ENCODE measurements at regions of chr17 and their contacts with region 1.

Region 1: DNA sequence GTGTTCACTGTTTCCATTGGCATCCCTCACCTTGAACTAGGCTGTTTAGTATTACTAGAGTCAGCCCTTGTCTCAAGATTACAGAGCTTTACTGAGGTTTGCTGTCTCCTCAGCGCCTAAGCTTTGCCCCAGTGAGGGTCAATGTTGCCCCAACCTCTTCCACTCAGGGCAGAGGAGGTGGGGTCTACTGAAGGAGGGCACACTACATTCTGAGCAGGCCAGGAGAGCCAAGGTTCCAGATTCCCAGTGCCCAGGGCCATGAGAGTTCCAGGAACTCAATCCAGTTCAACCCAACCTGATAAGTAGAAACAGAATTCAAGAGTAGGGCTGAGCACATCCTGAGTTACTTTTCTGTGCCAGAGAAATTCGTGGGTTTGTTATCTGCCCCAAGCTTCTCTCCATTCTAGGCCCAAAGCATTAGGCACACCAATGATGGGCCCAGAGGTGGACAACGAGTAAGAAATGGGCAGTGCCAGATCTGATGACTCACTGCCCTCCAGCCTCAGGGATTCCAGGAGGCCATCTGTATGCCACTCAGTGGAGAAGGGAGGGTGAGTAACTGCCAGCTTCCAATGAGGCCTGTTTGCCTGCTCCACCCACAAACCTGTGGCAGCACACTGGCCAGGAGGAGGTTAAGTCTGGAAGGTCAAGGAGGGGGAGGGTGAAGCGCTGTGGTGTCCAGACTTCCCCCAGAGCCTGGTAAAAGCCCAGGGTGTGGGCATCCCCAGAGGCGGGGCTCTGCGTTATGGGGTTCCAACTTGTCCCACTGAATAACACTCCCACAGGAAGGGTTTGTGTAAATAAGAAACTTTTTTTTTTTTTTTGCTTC is 8.3 kb downstream of the TUBG2 start:
- DNase-seq: peak; percentile 94
- H3K4me3 ChIP-seq: no peak overlapping the region
- H3K27ac ChIP-seq: peak overlapping the region; percentile 32
- H3K4me1 ChIP-seq: peaks cover 40% of the 10 kb centered on the region
- H3K27me3 ChIP-seq: no peaks in the 10 kb centered on the region
- CTCF ChIP-seq: no peak

Region 2: DNA sequence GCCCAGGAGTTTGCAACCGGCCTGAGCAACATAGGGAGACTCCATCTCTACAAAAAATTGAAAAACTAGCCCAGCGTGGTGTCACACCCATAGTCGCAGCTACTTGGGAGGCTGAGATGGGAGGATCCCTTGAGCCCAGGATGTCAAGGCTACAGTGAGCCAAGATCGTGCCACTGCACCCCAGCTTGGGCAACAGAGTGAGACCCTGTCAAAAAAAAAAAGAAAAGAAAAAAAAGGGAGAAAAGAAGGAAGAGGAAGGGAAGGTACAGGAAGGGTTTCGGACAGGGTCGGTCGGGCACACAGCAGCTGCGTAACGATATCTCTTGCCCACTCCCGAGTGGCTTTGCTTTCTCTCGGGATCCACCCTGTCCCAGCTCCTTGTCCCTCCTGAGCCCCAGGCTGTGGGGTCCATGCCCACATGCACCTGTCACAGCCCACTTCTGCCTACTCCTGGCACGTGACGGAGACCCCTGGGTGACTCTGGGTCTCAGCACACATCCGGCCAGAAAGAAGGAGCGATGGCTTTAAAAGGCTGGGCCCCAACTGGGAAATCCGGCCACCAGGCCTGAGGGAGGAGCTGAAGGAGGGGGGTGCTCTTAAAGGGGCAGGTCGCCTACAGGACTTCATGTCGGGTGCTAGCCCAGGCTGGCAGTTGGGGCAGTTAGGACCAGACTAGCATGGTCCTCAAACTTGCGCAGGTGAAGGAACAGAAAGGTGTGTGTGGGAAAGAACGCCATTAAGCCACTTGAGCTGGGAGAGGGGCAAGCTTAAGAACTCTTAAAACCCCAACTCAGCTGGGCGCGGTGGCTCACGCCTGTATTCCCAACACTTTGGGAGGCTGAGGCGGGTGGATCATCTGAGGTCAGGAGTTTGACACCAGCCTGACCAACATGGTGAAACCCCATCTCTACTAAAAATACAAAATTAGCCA is 473.1 kb before region 1 on chr17 and contains the start of gene GHDC:
- CTCF ChIA-PET with region 1: interaction called, 11 read pairs
- dilution Hi-C with region 1: no loop called
- in situ Hi-C with region 1: no loop called
- intact Hi-C with region 1: no loop called
- DNase-seq: peak; percentile 65
- H3K4me3 ChIP-seq: peak within 1 kb of the TSS; percentile 55 to 90 (median 70)
- H3K27ac ChIP-seq: peak within 1 kb of the TSS; percentile 20
- H3K4me1 ChIP-seq: no peaks in the 10 kb centered on the region
- H3K27me3 ChIP-seq: no peaks in the 10 kb centered on the region
- CTCF ChIP-seq: no peak
- total RNA-seq, gene GHDC: 10.9 to 24.8 TPM

Region 3: DNA sequence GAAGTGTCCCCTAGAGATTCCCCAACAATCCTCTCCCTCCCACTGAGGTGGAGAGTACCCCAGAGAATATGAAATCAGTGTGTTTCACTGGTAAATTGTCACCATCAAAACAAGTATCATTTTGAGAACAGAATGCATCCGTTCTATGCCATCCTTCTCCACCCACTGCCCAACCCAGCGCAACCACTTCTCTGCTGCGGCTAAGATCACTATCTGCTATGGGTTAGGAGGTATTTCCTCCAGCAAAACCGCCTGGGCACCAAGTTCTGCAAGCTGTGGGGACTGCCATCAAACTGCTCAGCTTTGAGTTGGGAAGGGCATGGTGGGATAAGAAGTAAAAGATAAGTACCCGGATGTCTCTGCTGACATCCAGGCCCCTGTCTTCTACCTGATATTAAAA is 39.4 kb after region 1 on chr17:
- CTCF ChIA-PET with region 1: no interaction called
- dilution Hi-C with region 1: no loop called
- in situ Hi-C with region 1: no loop called
- intact Hi-C with region 1: no loop called
- DNase-seq: no peak
- H3K4me3 ChIP-seq: no peak overlapping the region
- H3K27ac ChIP-seq: no peak overlapping the region
- H3K4me1 ChIP-seq: no peaks in the 10 kb centered on the region
- H3K27me3 ChIP-seq: no peaks in the 10 kb centered on the region
- CTCF ChIP-seq: no peak

Measured in mammary epithelial cell (primary cell).